BJ (cell line): ENCODE measurements at regions of chr7 and their contacts with region 1.

Region 1: DNA sequence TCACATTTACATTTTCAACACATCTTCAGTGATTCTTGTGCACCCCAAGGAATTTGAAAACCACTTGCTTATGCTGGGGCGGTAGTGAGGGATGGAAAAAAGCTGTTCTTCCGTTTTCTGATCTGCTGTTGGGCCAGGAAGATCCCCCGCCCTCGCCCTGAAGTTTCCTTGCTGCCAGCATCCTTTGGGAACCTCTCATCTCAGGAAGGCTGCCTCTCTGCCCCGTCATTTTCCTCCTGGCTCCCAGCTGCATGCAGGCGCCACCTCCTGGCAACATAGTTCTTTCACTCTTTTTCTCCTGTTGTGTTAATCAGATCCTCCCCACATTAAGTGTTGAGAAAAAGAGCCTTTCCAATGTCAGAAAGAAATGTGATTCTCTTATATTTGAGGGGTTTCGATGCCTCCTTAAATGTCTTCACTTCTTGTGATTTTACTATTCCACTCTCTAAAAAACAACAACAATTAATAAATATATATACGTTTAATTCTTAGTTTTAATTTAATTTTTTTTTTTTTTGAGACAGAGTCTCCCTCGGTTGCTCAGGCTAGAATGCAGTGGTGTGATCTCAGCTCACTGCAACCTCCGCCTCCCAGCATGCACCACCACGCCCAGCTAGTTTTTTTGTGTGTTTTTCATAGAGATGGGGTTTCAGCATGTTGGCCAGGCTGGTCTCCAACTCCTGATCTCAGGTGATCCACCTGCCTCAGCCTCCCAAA is 122.9 kb downstream of the RALA start:
- DNase-seq: no peak
- H3K4me3 ChIP-seq: no peak overlapping the region
- H3K27me3 ChIP-seq: no peaks in the 10 kb centered on the region
- CTCF ChIP-seq: peak; percentile 83

Region 2: DNA sequence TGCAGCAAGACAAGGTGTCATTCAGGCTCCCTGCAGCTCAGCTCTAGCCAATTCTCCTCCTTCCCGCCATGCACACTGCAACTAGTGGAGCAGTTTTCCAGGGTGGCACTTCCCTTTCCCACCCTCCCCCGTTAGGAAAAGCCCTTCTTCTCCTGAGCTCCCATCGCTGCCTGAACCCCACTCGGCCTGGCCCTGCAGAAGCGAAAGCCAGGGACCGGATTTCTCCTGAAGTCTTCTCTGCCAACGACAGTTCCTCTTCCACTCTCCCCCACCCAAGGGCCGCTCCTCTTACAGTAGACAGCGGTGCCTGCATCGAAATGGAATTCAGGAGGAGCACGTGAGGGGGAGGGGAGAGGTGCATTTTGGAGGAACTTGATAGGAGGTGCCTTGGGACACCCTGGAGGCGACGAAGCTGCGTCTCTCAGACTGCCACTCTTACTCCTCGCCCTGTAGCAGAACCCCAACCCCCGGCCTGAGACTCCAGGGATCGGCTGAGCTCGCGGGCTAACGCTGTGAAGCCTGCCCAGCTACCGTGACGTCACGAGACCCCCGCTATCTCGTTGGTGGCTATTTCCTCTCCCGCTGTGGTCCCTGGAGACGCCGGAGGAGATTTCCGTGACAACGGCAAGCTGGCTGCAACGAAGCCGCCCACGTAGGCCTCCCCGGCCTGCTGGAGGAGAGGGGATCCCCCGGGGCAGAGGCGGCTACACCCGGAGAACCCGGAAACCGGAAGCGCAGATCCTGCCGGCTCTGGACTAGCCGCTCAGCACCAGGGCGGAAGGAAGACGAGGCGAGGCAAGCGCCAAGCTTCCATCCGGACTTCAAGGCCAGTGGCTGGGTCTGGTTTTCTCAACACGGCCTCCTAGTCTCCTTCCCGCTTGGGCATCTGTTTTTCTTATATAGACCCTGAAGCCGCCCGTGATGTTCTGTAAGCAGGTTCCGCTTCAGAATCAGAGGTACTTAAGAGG is 13.1 kb before region 1 on chr7:
- CTCF ChIA-PET with region 1: interaction called, 35 read pairs
- POLR2A ChIA-PET with region 1: interaction called, 7 read pairs
- DNase-seq: peak; percentile 87
- H3K4me3 ChIP-seq: peak overlapping the region; percentile 52
- H3K27me3 ChIP-seq: no peaks in the 10 kb centered on the region
- CTCF ChIP-seq: no peak

Region 3: GRCh38 chr7:39937366-39938153 is 191.3 kb after region 1 on chr7:
- CTCF ChIA-PET with region 1: no interaction called
- POLR2A ChIA-PET with region 1: no interaction called
- DNase-seq: no peak
- H3K4me3 ChIP-seq: no peak overlapping the region
- H3K27me3 ChIP-seq: 0 out of 2 replicates have a peak, but pooled peaks cover 1% of the 10 kb centered on the region
- CTCF ChIP-seq: no peak